ENCODE measurements at regions of chr6 and their contacts with region 1.

Region 1: DNA sequence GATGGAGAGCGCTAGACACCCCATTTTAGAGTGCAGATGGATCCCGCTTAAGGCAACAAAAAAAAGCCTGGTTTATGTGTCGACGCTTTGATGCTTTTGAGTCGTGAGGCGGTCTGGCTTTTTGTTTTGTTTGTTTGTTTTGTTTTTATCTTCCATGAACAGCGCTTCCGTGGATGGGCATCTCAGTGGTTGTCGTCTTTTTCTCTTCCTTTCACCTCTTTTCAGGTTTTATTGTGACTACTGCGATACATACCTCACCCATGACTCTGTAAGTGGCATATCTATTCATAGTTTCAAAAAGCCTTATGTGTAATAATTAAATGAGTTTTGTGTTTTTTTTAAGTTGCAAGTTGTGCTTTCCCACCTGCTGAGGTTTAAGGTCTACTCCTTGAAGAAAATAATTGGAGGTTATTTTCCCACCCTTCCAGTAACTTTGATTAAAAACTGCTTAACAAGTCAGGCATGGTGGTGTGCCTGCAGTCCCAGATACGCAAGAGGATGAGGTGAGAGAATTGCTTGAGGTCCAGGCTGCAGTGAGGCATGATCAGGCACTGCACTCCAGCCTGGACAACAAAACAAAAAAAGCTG is 476 bp downstream of the SNRPC start:
- DNase-seq: no peak
- ATAC-seq: no peak
- H3K4me3 ChIP-seq: peak overlapping the region; percentile 76
- H3K27ac ChIP-seq: peak overlapping the region; percentile 96
- H3K4me1 ChIP-seq: peaks cover 10% of the 10 kb centered on the region
- H3K27me3 ChIP-seq: no peaks in the 10 kb centered on the region
- CTCF ChIP-seq: no peak

Region 2: GRCh38 chr6:34887753-34888513 is 130.2 kb after region 1 on chr6 and contains the start of gene TAF11:
- intact Hi-C with region 1: loop called (anchors 1 to 10 kb)
- DNase-seq: peak; percentile 94 to 96
- ATAC-seq: peak; percentile 94 to 96 (median 94)
- H3K4me3 ChIP-seq: peak within 1 kb of the TSS; percentile 79
- H3K27ac ChIP-seq: peak within 1 kb of the TSS; percentile 92
- H3K4me1 ChIP-seq: peaks cover 15% of the 10 kb centered on the region
- H3K27me3 ChIP-seq: no peaks in the 10 kb centered on the region
- CTCF ChIP-seq: no peak
- total RNA-seq, gene TAF11: 17.4 to 25.8 (median 23.1) TPM

Region 3: GRCh38 chr6:35181933-35182612 is 424.3 kb after region 1 on chr6:
- intact Hi-C with region 1: no loop called
- DNase-seq: peak; percentile 76 to 81
- ATAC-seq: peak; percentile 57 to 84 (median 77)
- H3K4me3 ChIP-seq: peak overlapping the region; percentile 30
- H3K27ac ChIP-seq: no peak overlapping the region
- H3K4me1 ChIP-seq: peaks cover 10% of the 10 kb centered on the region
- H3K27me3 ChIP-seq: peaks cover 0 to 9% (median 0%) of the 10 kb centered on the region in 3 donors
- CTCF ChIP-seq: no peak